Sciatic nerve (tissue), 2 donors: ENCODE measurements at regions of chr20 and their contacts with region 1.

Region 1: DNA sequence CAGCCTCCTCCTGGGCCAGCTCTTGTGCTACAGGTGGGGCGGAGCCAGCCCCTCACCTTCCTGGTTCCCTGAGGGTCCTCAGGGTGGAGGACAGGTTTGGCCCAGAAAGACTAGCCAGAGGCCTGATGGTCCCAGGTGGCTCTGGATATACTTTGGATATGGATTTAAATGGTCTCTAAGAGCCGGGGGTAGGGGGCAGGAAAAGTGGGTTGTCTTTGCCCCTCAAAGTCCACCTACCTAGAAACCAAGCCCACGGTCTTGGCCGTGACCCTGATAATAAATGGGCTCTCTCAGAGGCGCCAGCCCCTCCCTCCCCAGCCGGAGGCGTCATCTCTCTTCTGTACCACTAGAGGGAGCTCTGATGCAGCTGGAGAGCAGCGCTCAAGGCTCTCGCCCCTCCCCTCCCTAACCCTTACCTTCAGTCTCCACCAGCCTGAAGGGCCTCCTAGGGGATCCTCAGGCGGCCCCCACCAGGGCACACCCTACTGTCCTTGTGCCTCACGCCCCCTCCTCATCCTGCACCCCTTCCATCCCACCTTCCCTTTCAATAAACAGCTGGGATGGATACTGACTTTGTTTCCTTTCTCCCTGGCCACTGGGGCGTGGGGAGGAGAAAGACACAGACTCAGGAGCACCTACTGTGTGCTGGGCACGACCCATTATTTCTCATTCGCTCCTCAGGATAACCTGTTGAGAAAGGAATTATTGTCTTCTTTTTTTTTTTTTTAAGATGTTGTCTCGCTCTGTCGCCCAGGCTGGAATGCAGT is 7.6 kb downstream of the NRSN2 start:
- DNase-seq: peak; percentile 82
- ATAC-seq: peak; percentile 93

Region 2: GRCh38 chr20:483813-484644 is 129.5 kb after region 1 on chr20:
- intact Hi-C with region 1: loop called (anchors 5 kb)
- DNase-seq: peak; percentile 63
- ATAC-seq: peak; percentile 55

Region 3: GRCh38 chr20:610130-611046 is 255.9 kb after region 1 on chr20 and contains the start of gene TCF15:
- intact Hi-C with region 1: no loop called
- DNase-seq: no peak
- ATAC-seq: no peak
- total RNA-seq, gene TCF15: 2.1 TPM